Activated B cell treated with CpG ODN at 0.5 μM for 24 hours (primary cell): ENCODE measurements at regions of chr2 and their contacts with region 1.

Region 1: DNA sequence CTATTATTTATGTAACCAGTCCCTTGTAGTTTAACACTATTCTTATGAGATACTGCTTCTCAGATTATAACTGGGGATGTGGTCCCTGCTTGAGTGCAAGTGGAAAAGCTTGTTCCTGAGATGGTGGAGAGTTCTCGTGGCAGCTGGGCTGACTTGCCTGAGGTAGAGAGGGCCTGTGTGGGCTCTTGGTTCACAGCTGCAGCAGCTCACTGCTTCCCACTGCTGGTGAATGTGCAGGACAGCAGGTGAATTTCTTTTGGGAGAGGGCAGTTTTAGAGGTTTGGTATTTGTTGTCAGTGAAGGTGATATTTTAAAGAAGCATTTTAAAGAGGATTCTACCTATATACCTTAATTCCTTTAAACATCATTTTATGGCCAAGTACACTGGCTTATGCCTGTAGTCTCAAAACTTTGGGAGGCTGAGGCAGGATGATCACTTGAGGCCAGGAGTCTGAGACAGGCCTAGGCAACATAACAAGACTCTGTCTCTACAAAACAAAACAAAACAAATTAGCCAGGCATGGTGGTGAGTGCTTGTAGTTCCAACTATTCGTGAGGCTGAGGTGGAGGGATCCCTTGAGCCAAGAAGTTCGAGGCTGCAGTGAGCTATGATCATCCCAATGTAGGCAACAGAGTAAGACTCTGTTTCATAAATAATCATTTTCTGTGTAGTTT is 94.8 kb downstream of the MTA3 start:
- DNase-seq: peak; percentile 25
- ATAC-seq: peak; percentile 96
- H3K4me3 Mint-ChIP-seq: peak overlapping the region; percentile 12
- H3K27ac Mint-ChIP-seq: peak overlapping the region; percentile 10
- H3K4me1 Mint-ChIP-seq: peaks cover 17% of the 10 kb centered on the region
- H3K27me3 Mint-ChIP-seq: no peaks in the 10 kb centered on the region
- CTCF ChIP-seq: peak; percentile 67

Region 2: GRCh38 chr2:41840702-41841551 is 822.3 kb before region 1 on chr2:
- CTCF ChIA-PET with region 1: no interaction called
- POLR2A ChIA-PET with region 1: no interaction called
- intact Hi-C with region 1: loop called (anchors 2 kb)
- DNase-seq: peak; percentile 88
- ATAC-seq: peak; percentile 98
- H3K4me3 Mint-ChIP-seq: peak overlapping the region; percentile 89
- H3K27ac Mint-ChIP-seq: peak overlapping the region; percentile 82
- H3K4me1 Mint-ChIP-seq: peaks cover 13% of the 10 kb centered on the region
- H3K27me3 Mint-ChIP-seq: peaks cover 24% of the 10 kb centered on the region
- CTCF ChIP-seq: peak; percentile 78

Region 3: GRCh38 chr2:42095923-42096408 is 567.3 kb before region 1 on chr2:
- CTCF ChIA-PET with region 1: no interaction called
- POLR2A ChIA-PET with region 1: no interaction called
- intact Hi-C with region 1: loop called (anchors 10 kb)
- DNase-seq: peak; percentile 45
- ATAC-seq: peak; percentile 30
- H3K4me3 Mint-ChIP-seq: no peak overlapping the region
- H3K27ac Mint-ChIP-seq: no peak overlapping the region
- H3K4me1 Mint-ChIP-seq: peaks cover 49% of the 10 kb centered on the region
- H3K27me3 Mint-ChIP-seq: no peaks in the 10 kb centered on the region
- CTCF ChIP-seq: peak; percentile 31

Region 4: DNA sequence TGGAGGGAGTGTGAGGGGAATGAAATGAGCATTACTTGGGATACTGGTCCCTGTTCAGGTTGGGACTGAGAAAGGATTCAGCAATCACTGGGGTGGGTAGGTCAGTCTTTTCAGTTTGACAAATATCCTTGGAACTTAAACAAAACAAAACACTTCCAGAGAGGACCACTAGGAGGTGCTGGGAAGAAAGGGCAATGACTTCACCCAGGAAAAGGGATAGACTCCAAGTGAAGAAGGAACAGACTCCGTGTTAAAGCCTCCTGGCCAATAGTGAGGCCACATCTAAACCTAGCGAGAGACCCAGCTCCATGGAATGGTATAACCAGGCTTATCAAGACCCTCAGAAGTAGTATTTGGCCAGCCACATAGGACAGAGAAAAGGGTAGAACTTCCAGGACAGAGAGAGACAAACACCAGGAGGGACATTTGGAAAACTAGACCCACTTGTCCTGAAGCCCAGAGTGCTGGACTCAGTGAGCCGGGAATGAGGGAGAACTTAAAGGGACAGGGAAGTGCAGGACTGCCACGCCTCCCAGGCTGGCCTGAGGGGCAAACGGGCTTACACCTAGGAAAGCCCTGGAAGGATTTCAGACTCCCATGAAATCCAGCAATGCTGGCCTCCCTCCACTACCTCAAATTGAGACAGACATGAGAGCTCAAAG is 149.9 kb before region 1 on chr2:
- CTCF ChIA-PET with region 1: interaction called, 22 read pairs
- POLR2A ChIA-PET with region 1: no interaction called
- intact Hi-C with region 1: loop called (anchors 1 kb)
- DNase-seq: no peak
- ATAC-seq: no peak
- H3K4me3 Mint-ChIP-seq: no peak overlapping the region
- H3K27ac Mint-ChIP-seq: peak overlapping the region; percentile 19
- H3K4me1 Mint-ChIP-seq: peaks cover 6% of the 10 kb centered on the region
- H3K27me3 Mint-ChIP-seq: peaks cover 6% of the 10 kb centered on the region
- CTCF ChIP-seq: no peak

Region 5: GRCh38 chr2:42792583-42793333 is 129.5 kb after region 1 on chr2 and contains the start of gene HAAO:
- CTCF ChIA-PET with region 1: no interaction called
- POLR2A ChIA-PET with region 1: no interaction called
- intact Hi-C with region 1: loop called (anchors 2 kb)
- DNase-seq: peak; percentile 59
- ATAC-seq: peak; percentile 59
- H3K4me3 Mint-ChIP-seq: peak within 1 kb of the TSS; percentile 92
- H3K27ac Mint-ChIP-seq: peak within 1 kb of the TSS; percentile 93
- H3K4me1 Mint-ChIP-seq: peaks cover 47% of the 10 kb centered on the region
- H3K27me3 Mint-ChIP-seq: no peaks in the 10 kb centered on the region
- CTCF ChIP-seq: no peak
- total RNA-seq, gene HAAO: 11.4 TPM in 2 replicates